ENCODE measurements at regions of chr17 and their contacts with region 1.

Region 1: DNA sequence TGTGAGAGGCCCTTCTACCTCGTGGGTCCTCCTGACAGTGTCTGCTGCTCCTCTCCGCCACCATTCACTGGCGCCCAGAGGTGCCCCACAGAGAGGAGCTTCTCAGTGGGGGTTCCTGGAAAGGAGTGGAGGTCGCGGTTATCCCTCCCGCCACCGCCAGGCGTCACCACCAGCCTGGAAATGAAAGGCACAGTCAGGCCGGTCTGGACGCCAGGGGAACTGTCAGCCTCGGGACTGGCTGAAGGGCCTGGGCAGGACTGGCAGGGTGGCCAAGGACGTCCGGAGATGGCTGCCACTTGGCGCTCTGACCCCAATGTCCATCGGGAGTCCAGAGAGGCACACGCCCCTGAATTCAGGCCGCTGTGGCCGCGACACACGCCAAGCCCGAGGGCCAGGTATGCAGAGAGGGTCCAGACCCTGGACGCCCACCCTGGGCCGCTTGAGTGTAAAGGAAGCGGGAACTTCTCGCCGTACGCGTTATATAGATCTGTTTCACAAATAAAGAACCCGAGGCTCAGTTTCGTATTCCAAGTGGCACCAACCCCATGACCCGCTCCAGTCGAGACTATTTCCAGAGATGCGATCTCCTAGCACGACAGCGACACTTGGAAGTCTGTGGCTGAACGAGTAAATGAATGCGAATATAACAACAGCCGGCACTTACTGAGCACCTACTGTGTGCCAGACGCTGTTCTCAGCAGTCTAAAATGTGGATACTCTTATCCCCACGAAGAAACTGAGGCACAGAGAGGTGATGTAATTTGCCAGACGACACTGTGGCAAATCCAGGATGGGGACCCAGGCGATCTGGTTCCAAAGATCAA is 7.6 kb upstream of the NXPH3 start:
- DNase-seq: no peak
- ATAC-seq: peak; percentile 80
- H3K4me3 ChIP-seq: no peak overlapping the region
- H3K27ac ChIP-seq: no peak overlapping the region
- H3K4me1 ChIP-seq: peaks cover 13% of the 10 kb centered on the region
- H3K27me3 ChIP-seq: peaks cover 0 to 2% of the 10 kb centered on the region in 2 experiments; a peak in 1 of 4 replicates
- CTCF ChIP-seq: peak; percentile 94 to 97 (median 96)
- EP300 ChIP-seq: no peak
- POLR2A ChIP-seq: no peak
- RAD21 ChIP-seq: peak; percentile 92

Region 2: GRCh38 chr17:49687878-49688491 is 119.9 kb after region 1 on chr17:
- CTCF ChIA-PET with region 1: interaction called, 483 read pairs
- POLR2A ChIA-PET with region 1: interaction called, 4 read pairs
- RAD21 ChIA-PET with region 1: interaction called, 14 read pairs
- SMC1A ChIA-PET with region 1: interaction called, 121 read pairs
- in situ Hi-C with region 1: no loop called
- intact Hi-C with region 1: no loop called
- DNase-seq: no peak
- ATAC-seq: peak; percentile 45; the same call in 1 of the 3 replicates
- H3K4me3 ChIP-seq: no peak overlapping the region
- H3K27ac ChIP-seq: no peak overlapping the region
- H3K4me1 ChIP-seq: no peaks in the 10 kb centered on the region
- H3K27me3 ChIP-seq: no peaks in the 10 kb centered on the region
- CTCF ChIP-seq: no peak
- EP300 ChIP-seq: no peak
- POLR2A ChIP-seq: no peak
- RAD21 ChIP-seq: no peak

Region 3: DNA sequence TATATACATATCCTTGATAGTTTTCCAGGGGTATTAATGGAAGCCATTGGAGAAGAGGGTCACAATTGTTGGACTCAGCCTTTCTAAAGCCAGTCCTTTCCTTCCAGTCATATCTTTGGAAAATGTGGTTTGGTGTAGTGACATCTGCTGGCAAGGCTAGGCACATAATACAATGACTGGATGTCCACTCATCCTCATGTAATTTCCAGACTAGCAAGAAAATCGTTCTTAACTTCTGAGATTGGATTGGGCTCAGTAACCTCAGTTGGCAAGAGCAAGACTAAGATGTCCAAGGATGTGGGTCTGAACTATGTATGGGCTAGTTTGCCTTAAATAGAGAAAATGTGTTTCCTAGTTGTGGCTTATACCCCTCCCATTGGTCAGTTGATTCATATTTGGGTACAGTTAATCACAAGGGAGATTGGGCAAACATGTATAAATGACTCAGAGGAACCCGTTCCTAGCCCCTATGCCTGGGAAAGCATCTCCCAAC is 211.7 kb after region 1 on chr17:
- CTCF ChIA-PET with region 1: interaction called, 16 read pairs
- POLR2A ChIA-PET with region 1: no interaction called
- RAD21 ChIA-PET with region 1: no interaction called
- SMC1A ChIA-PET with region 1: interaction called, 3 read pairs
- in situ Hi-C with region 1: no loop called
- intact Hi-C with region 1: loop called (anchors 5 kb)
- DNase-seq: no peak
- ATAC-seq: peak; percentile 82
- H3K4me3 ChIP-seq: no peak overlapping the region
- H3K27ac ChIP-seq: no peak overlapping the region
- H3K4me1 ChIP-seq: no peaks in the 10 kb centered on the region
- H3K27me3 ChIP-seq: no peaks in the 10 kb centered on the region; a peak in 1 of 4 replicates
- CTCF ChIP-seq: peak; percentile 53 to 71 (median 56); a peak in 5 of 6 replicates
- EP300 ChIP-seq: no peak
- POLR2A ChIP-seq: no peak
- RAD21 ChIP-seq: peak; percentile 63; the same call in 1 of the 2 replicates

Region 4: GRCh38 chr17:49843774-49844350 is 275.8 kb after region 1 on chr17:
- CTCF ChIA-PET with region 1: interaction called, 3 read pairs
- POLR2A ChIA-PET with region 1: no interaction called
- RAD21 ChIA-PET with region 1: interaction called, 3 read pairs
- SMC1A ChIA-PET with region 1: no interaction called
- in situ Hi-C with region 1: loop called (anchors 10 kb)
- intact Hi-C with region 1: no loop called
- DNase-seq: no peak
- ATAC-seq: peak; percentile 56; the same call in 2 of the 3 replicates
- H3K4me3 ChIP-seq: no peak overlapping the region
- H3K27ac ChIP-seq: no peak overlapping the region
- H3K4me1 ChIP-seq: no peaks in the 10 kb centered on the region
- H3K27me3 ChIP-seq: no peaks in the 10 kb centered on the region
- CTCF ChIP-seq: peak; percentile 37 to 61 (median 40)
- EP300 ChIP-seq: no peak
- POLR2A ChIP-seq: no peak
- RAD21 ChIP-seq: peak; percentile 36

Region 5: DNA sequence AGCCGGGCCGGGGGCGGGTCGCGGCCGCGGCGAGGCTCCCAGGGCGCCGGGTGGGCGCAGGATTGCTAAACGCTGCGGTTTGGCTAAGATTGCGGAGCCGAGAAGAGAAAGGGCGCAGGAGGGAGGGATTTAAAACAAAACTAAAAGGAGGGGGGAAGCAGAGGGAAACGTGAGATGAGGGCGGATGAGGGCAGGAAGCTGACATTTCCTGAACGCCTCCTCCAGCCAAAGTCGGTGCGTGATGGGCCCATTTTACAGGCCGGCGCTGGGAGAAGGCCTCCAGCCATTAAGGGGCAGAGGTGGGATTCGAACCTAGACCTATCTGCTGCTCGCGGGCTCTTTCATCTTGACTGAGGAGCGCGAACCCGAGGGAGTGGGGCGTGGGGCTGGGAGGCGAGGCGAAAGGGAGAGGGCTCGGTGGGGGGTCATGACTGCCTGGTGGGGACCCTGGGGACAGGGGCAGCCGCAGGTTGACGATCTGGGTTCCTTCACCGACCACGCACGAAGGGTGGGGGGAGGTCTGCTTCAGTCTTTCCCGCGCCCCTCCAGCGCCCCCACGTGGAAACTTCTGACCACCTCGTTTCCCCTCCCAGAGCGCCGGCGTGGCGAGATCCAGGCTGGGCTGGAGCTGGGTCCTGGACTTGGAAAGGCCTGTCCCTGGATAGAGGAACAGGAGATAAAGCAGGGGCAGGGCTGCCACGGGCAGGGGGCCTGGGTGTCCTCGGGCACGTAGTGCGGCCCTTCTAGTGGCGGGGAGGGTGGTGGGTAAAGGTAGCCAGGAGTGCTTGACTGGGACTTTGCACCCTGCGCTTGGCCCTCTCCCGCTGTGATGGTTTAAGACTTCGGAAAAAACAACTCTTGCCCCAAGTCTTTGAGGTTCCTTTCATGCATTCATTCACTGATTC is 283.6 kb after region 1 on chr17:
- CTCF ChIA-PET with region 1: interaction called, 3 read pairs
- POLR2A ChIA-PET with region 1: no interaction called
- RAD21 ChIA-PET with region 1: no interaction called
- SMC1A ChIA-PET with region 1: no interaction called
- in situ Hi-C with region 1: loop called (anchors 10 kb)
- intact Hi-C with region 1: loop called (anchors 5 kb)
- DNase-seq: no peak
- ATAC-seq: peak; percentile 78
- H3K4me3 ChIP-seq: peak overlapping the region; percentile 70
- H3K27ac ChIP-seq: no peak overlapping the region
- H3K4me1 ChIP-seq: no peaks in the 10 kb centered on the region
- H3K27me3 ChIP-seq: no peaks in the 10 kb centered on the region; a peak in 3 of 4 replicates
- CTCF ChIP-seq: peak; percentile 58 to 70 (median 65)
- EP300 ChIP-seq: no peak
- POLR2A ChIP-seq: no peak; the same call in 1 of the 2 replicates
- RAD21 ChIP-seq: peak; percentile 53